ENCODE measurements at regions of chr9 and their contacts with region 1.

Region 1: DNA sequence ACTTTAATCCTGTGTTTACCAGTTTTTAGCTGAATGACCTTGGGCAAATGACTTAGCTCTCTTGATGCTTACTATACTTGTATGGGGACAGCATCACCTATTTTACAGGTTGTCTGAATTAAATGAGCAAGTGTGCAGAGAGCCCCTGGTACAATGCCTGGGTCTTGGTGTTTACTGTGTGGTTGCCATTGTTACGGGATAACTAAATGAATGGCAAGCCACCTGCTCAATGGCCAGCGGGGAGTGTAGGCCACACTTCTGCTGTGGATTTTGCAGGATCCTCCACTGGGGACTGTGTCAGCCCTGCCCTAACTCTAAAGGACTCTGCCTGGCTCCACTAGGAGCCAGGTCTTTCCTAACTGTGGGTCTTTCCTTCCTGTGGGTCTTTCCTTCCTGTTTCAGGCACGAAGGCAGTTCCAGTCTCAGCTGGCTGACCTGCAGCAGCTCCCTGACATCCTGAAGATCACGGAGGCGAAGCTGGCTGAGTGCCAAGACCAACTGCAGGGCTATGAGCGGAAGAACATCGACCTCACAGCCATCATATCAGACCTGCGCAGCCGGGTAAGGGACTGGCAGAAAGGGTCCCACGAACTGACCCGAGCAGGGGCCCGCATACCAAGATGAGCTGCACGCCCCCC is 10.3 kb upstream of the GLE1 start:
- DNase-seq: peak; percentile 92
- H3K4me3 ChIP-seq: no peak overlapping the region
- H3K27ac ChIP-seq: peak overlapping the region; percentile 64
- H3K4me1 ChIP-seq: peaks cover 26% of the 10 kb centered on the region
- H3K27me3 ChIP-seq: no peaks in the 10 kb centered on the region
- CTCF ChIP-seq: no peak
- POLR2A ChIP-seq: peak; percentile 33

Region 2: GRCh38 chr9:128455849-128456612 is 38.2 kb before region 1 on chr9 and contains the start of gene ODF2:
- CTCF ChIA-PET with region 1: interaction called, 3 read pairs
- POLR2A ChIA-PET with region 1: no interaction called
- dilution Hi-C with region 1: no loop called
- intact Hi-C with region 1: loop called (anchors 2 kb)
- DNase-seq: peak; percentile 95
- H3K4me3 ChIP-seq: peak within 1 kb of the TSS; percentile 50 to 66 (median 55)
- H3K27ac ChIP-seq: peak within 1 kb of the TSS; percentile 64
- H3K4me1 ChIP-seq: peaks cover 7% of the 10 kb centered on the region
- H3K27me3 ChIP-seq: no peaks in the 10 kb centered on the region
- CTCF ChIP-seq: no peak
- POLR2A ChIP-seq: peak; percentile 86
- total RNA-seq, gene ODF2: 49.5 and 50.5 TPM in 2 replicates

Region 3: GRCh38 chr9:128504485-128505413 is 10.5 kb after region 1 on chr9 and contains the start of gene GLE1:
- CTCF ChIA-PET with region 1: interaction called, 12 read pairs
- POLR2A ChIA-PET with region 1: no interaction called
- dilution Hi-C with region 1: no loop called
- intact Hi-C with region 1: loop called (anchors 1 kb)
- DNase-seq: peak; percentile 94
- H3K4me3 ChIP-seq: peak within 1 kb of the TSS; percentile 22 to 80 (median 72)
- H3K27ac ChIP-seq: peak within 1 kb of the TSS; percentile 12
- H3K4me1 ChIP-seq: peaks cover 7% of the 10 kb centered on the region
- H3K27me3 ChIP-seq: no peaks in the 10 kb centered on the region
- CTCF ChIP-seq: no peak
- POLR2A ChIP-seq: peak; percentile 93
- total RNA-seq, gene GLE1: 20.5 and 22.6 TPM in 2 replicates

Region 4: GRCh38 chr9:128558431-128559310 is 64.4 kb after region 1 on chr9:
- CTCF ChIA-PET with region 1: interaction called, 6 read pairs
- POLR2A ChIA-PET with region 1: interaction called, 6 read pairs
- dilution Hi-C with region 1: no loop called
- intact Hi-C with region 1: loop called (anchors 2 kb)
- DNase-seq: peak; percentile 97
- H3K4me3 ChIP-seq: peak overlapping the region in 1 of 3 experiments; percentile 24
- H3K27ac ChIP-seq: peak overlapping the region; percentile 81
- H3K4me1 ChIP-seq: peaks cover 57% of the 10 kb centered on the region
- H3K27me3 ChIP-seq: no peaks in the 10 kb centered on the region
- CTCF ChIP-seq: no peak
- POLR2A ChIP-seq: no peak

Region 5: GRCh38 chr9:128723866-128724743 is 229.9 kb after region 1 on chr9 and contains the start of gene ZDHHC12:
- CTCF ChIA-PET with region 1: no interaction called
- POLR2A ChIA-PET with region 1: no interaction called
- dilution Hi-C with region 1: no loop called
- intact Hi-C with region 1: no loop called
- DNase-seq: peak; percentile 95
- H3K4me3 ChIP-seq: peak within 1 kb of the TSS; percentile 53 to 69 (median 58)
- H3K27ac ChIP-seq: no peak within 1 kb of the TSS
- H3K4me1 ChIP-seq: peaks cover 5% of the 10 kb centered on the region
- H3K27me3 ChIP-seq: no peaks in the 10 kb centered on the region
- CTCF ChIP-seq: no peak
- POLR2A ChIP-seq: peak; percentile 94
- total RNA-seq, gene ZDHHC12: 28.8 and 31.1 TPM in 2 replicates